CD8-positive, alpha-beta T cell (primary cell): ENCODE measurements at regions of chr1 and their contacts with region 1.

Region 1: GRCh38 chr1:98849969-98850636 is 154.6 kb downstream of the PLPPR5 start:
- DNase-seq: peak in 2 of 9 experiments; percentile 25 to 46
- ATAC-seq: no peak
- H3K4me3 ChIP-seq: no peak overlapping the region
- H3K4me3 Mint-ChIP-seq: peak overlapping the region; percentile 32
- H3K27ac ChIP-seq: no peak overlapping the region
- H3K27ac Mint-ChIP-seq: peak overlapping the region; percentile 73
- H3K4me1 ChIP-seq: peaks cover 31% of the 10 kb centered on the region
- H3K4me1 Mint-ChIP-seq: peaks cover 20% of the 10 kb centered on the region
- H3K27me3 ChIP-seq: no peaks in the 10 kb centered on the region
- H3K27me3 Mint-ChIP-seq: no peaks in the 10 kb centered on the region
- CTCF ChIP-seq: no peak

Region 2: GRCh38 chr1:98826891-98827440 is 23.1 kb before region 1 on chr1:
- CTCF ChIA-PET with region 1: no interaction called
- POLR2A ChIA-PET with region 1: no interaction called
- intact Hi-C with region 1: no loop called
- DNase-seq: no peak
- ATAC-seq: no peak
- H3K4me3 ChIP-seq: no peak overlapping the region
- H3K4me3 Mint-ChIP-seq: no peak overlapping the region
- H3K27ac ChIP-seq: no peak overlapping the region
- H3K27ac Mint-ChIP-seq: no peak overlapping the region
- H3K4me1 ChIP-seq: no peaks in the 10 kb centered on the region
- H3K4me1 Mint-ChIP-seq: no peaks in the 10 kb centered on the region
- H3K27me3 ChIP-seq: no peaks in the 10 kb centered on the region
- H3K27me3 Mint-ChIP-seq: no peaks in the 10 kb centered on the region
- CTCF ChIP-seq: no peak

Region 3: DNA sequence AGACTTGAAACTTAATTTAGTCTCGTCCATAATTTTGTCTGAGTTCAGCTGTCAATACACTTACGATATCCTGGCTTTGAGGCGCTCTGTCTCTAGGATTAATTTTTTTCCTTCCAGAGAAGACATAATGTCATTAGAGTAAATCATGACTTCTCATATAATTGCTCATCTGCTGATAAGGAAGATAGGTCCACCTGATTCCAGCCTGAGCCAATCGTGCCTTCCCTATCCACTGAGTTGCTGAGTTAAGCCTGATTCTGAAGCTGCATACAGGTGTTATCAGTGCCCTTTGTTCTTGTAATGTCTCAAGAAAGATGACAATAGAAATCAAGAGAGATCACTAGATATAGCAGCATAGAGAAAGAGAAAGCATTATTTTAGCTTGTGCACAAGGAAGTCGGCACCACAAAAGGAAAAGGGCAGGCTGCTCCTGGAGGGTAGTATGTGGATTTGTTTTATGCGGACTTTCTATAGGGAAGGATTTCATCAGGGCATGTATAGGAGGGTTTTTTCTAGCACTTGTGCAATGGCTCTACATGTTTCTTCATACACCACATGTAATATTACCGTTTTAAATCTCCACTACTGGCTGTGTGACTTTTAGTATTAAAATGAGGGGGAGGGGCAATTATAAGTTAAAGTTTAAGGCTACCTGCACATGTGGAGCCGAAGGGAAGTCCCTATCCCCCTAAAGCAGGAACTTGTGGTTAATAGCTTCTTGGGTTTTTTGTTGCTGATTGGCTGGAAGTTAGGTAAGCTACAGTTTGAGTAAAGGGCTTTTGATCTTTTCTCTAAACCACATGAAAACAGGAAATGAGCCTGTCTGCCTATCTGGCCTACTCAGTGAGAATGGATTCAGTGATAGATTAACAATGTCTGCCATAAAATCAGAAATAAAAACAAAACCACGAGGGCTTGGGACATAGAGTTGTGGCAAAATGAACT is 21.1 kb after region 1 on chr1:
- CTCF ChIA-PET with region 1: interaction called, 3 read pairs
- POLR2A ChIA-PET with region 1: interaction called, 4 read pairs
- intact Hi-C with region 1: loop called in 1 of 2 experiments (anchors 2 kb)
- DNase-seq: peak in 7 of 9 experiments; percentile 18 to 93 (median 53)
- ATAC-seq: peak; percentile 91
- H3K4me3 ChIP-seq: peak overlapping the region; percentile 26 to 38
- H3K4me3 Mint-ChIP-seq: peak overlapping the region; percentile 79
- H3K27ac ChIP-seq: peak overlapping the region; percentile 43 to 73
- H3K27ac Mint-ChIP-seq: peak overlapping the region; percentile 95
- H3K4me1 ChIP-seq: peaks cover 25% of the 10 kb centered on the region
- H3K4me1 Mint-ChIP-seq: peaks cover 27% of the 10 kb centered on the region
- H3K27me3 ChIP-seq: no peaks in the 10 kb centered on the region
- H3K27me3 Mint-ChIP-seq: no peaks in the 10 kb centered on the region
- CTCF ChIP-seq: no peak

Region 4: DNA sequence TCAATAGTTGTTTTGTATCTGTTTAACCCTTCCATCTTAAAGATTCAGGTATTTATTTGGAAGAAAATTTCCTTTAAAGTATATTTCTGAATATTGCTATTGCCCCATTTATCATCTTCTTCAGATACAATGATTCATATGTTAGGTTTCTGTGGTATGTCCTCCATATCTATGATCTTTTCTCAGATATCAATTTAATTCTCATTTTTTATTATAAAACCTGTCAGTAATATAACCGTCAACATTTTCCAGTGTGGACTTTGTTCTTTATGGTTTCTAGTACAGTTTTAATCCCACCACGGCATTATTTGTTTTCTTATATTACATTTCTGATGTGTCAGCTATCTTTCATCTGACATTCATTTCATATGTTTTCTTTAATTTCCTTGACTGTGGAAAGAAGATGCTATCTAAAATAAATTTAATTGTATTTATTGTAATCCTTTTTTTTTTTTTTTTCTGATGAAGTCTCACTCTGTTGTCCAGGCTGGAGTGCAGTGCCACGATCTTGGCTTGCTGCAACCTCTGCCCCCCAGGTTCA is 56.7 kb after region 1 on chr1:
- CTCF ChIA-PET with region 1: no interaction called
- POLR2A ChIA-PET with region 1: no interaction called
- intact Hi-C with region 1: loop called in 1 of 2 experiments (anchors 5 kb)
- DNase-seq: no peak
- ATAC-seq: no peak
- H3K4me3 ChIP-seq: no peak overlapping the region
- H3K4me3 Mint-ChIP-seq: no peak overlapping the region
- H3K27ac ChIP-seq: no peak overlapping the region
- H3K27ac Mint-ChIP-seq: no peak overlapping the region
- H3K4me1 ChIP-seq: no peaks in the 10 kb centered on the region
- H3K4me1 Mint-ChIP-seq: peaks cover 2% of the 10 kb centered on the region
- H3K27me3 ChIP-seq: no peaks in the 10 kb centered on the region
- H3K27me3 Mint-ChIP-seq: no peaks in the 10 kb centered on the region
- CTCF ChIP-seq: no peak

Region 5: GRCh38 chr1:98975113-98975512 is 125.0 kb after region 1 on chr1:
- CTCF ChIA-PET with region 1: no interaction called
- POLR2A ChIA-PET with region 1: no interaction called
- intact Hi-C with region 1: no loop called
- DNase-seq: no peak
- ATAC-seq: no peak
- H3K4me3 ChIP-seq: no peak overlapping the region
- H3K4me3 Mint-ChIP-seq: no peak overlapping the region
- H3K27ac ChIP-seq: no peak overlapping the region
- H3K27ac Mint-ChIP-seq: no peak overlapping the region
- H3K4me1 ChIP-seq: no peaks in the 10 kb centered on the region
- H3K4me1 Mint-ChIP-seq: no peaks in the 10 kb centered on the region
- H3K27me3 ChIP-seq: no peaks in the 10 kb centered on the region
- H3K27me3 Mint-ChIP-seq: no peaks in the 10 kb centered on the region
- CTCF ChIP-seq: no peak